ENCODE measurements at regions of chr14 and their contacts with region 1.

Region 1: GRCh38 chr14:92612988-92613658 is 99.5 kb downstream of the RIN3 start:
- DNase-seq: peak; percentile 50 to 62 (median 55)
- H3K4me3 ChIP-seq: no peak overlapping the region
- H3K4me3 Mint-ChIP-seq: peak overlapping the region in 2 of 8 donors; percentile 15 to 33
- H3K27ac ChIP-seq: no peak overlapping the region
- H3K27ac Mint-ChIP-seq: peak overlapping the region; percentile 22 to 91 (median 63)
- H3K4me1 ChIP-seq: peaks cover 52% of the 10 kb centered on the region
- H3K4me1 Mint-ChIP-seq: peaks cover 32 to 72% (median 52%) of the 10 kb centered on the region in 4 donors
- H3K27me3 ChIP-seq: no peaks in the 10 kb centered on the region
- H3K27me3 Mint-ChIP-seq: no peaks in the 10 kb centered on the region

Region 2: DNA sequence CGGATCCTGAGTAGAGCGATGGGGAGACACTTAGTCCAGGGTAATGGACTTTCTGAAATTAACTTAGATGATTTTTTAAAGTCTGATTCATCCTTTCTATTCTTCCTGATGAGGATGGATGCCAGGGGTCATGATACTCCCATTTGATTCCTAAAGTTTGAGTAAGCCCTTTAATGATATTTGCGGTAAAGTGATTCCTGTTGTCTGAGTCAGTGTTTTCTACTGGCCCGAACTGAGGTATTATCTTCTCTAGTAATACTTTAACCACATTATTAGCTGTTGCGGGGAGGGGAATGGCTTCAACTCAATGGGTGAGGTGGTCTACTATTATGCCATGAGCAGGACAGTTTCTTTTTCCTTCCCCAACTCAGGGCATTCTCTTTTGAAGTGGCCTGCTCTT is 12.1 kb after region 1 on chr14:
- CTCF ChIA-PET with region 1: interaction called, 15 read pairs
- POLR2A ChIA-PET with region 1: interaction called, 3 read pairs
- intact Hi-C with region 1: no loop called
- DNase-seq: no peak
- H3K4me3 ChIP-seq: no peak overlapping the region
- H3K4me3 Mint-ChIP-seq: no peak overlapping the region
- H3K27ac ChIP-seq: no peak overlapping the region
- H3K27ac Mint-ChIP-seq: no peak overlapping the region
- H3K4me1 ChIP-seq: no peaks in the 10 kb centered on the region
- H3K4me1 Mint-ChIP-seq: peaks cover 0 to 2% (median 0%) of the 10 kb centered on the region in 4 donors
- H3K27me3 ChIP-seq: no peaks in the 10 kb centered on the region
- H3K27me3 Mint-ChIP-seq: no peaks in the 10 kb centered on the region

Region 3: GRCh38 chr14:92651106-92651757 is 38.1 kb after region 1 on chr14:
- CTCF ChIA-PET with region 1: interaction called, 98 read pairs
- POLR2A ChIA-PET with region 1: interaction called, 139 read pairs
- intact Hi-C with region 1: loop called (anchors 1 kb)
- DNase-seq: peak; percentile 82 to 95 (median 85)
- H3K4me3 ChIP-seq: peak overlapping the region; percentile 47 to 58
- H3K4me3 Mint-ChIP-seq: peak overlapping the region; percentile 92 to 99 (median 98)
- H3K27ac ChIP-seq: peak overlapping the region; percentile 84
- H3K27ac Mint-ChIP-seq: peak overlapping the region; percentile 96 to 100 (median 99)
- H3K4me1 ChIP-seq: peaks cover 80% of the 10 kb centered on the region
- H3K4me1 Mint-ChIP-seq: peaks cover 51 to 94% (median 67%) of the 10 kb centered on the region in 4 donors
- H3K27me3 ChIP-seq: no peaks in the 10 kb centered on the region
- H3K27me3 Mint-ChIP-seq: no peaks in the 10 kb centered on the region

Region 4: GRCh38 chr14:92670160-92670559 is 57.0 kb after region 1 on chr14:
- CTCF ChIA-PET with region 1: interaction called, 35 read pairs
- POLR2A ChIA-PET with region 1: interaction called, 7 read pairs
- intact Hi-C with region 1: no loop called
- DNase-seq: no peak
- H3K4me3 ChIP-seq: no peak overlapping the region
- H3K4me3 Mint-ChIP-seq: peak overlapping the region in 1 of 8 donors; percentile 32
- H3K27ac ChIP-seq: no peak overlapping the region
- H3K27ac Mint-ChIP-seq: peak overlapping the region in 6 of 7 donors; percentile 47 to 91 (median 82)
- H3K4me1 ChIP-seq: peaks cover 51% of the 10 kb centered on the region
- H3K4me1 Mint-ChIP-seq: peaks cover 20 to 81% (median 51%) of the 10 kb centered on the region in 4 donors
- H3K27me3 ChIP-seq: no peaks in the 10 kb centered on the region
- H3K27me3 Mint-ChIP-seq: no peaks in the 10 kb centered on the region

Region 5: GRCh38 chr14:92675421-92675820 is 62.3 kb after region 1 on chr14:
- CTCF ChIA-PET with region 1: interaction called, 59 read pairs
- POLR2A ChIA-PET with region 1: interaction called, 17 read pairs
- intact Hi-C with region 1: no loop called
- DNase-seq: no peak
- H3K4me3 ChIP-seq: no peak overlapping the region
- H3K4me3 Mint-ChIP-seq: no peak overlapping the region
- H3K27ac ChIP-seq: no peak overlapping the region
- H3K27ac Mint-ChIP-seq: peak overlapping the region in 6 of 7 donors; percentile 23 to 95 (median 56)
- H3K4me1 ChIP-seq: peaks cover 39% of the 10 kb centered on the region
- H3K4me1 Mint-ChIP-seq: peaks cover 20 to 65% (median 40%) of the 10 kb centered on the region in 4 donors
- H3K27me3 ChIP-seq: no peaks in the 10 kb centered on the region
- H3K27me3 Mint-ChIP-seq: no peaks in the 10 kb centered on the region

Region 6: DNA sequence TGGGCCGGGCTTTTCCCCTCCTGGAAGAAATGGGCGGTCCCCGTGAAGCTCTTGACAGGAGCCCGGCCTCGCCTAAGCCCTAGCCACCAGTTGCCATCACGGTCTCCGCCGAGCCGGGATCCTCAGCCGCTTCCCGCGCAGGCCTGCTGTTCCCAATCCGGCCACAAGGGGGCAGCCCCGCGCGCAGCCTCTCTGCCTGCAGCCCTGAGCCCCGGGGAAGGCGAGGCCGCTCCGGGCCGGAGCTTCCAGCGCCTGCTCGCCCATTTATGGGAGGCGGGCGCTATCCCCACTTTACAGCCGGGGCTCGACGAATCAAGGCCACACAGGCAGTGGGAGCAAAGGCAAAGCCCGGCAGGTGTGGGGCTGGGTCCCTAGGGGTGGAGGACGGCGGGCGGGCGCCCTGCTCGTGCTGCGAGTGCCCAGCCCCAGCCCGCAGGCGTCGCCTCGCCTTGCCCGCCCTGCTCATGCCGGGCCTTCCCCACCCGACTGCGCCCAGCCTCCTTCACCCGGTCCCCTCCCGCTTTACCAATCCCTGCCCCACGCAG is 73.8 kb after region 1 on chr14:
- CTCF ChIA-PET with region 1: interaction called, 59 read pairs
- POLR2A ChIA-PET with region 1: interaction called, 4 read pairs
- intact Hi-C with region 1: no loop called
- DNase-seq: peak in 3 of 5 donors; percentile 46 to 61 (median 61)
- H3K4me3 ChIP-seq: no peak overlapping the region
- H3K4me3 Mint-ChIP-seq: no peak overlapping the region
- H3K27ac ChIP-seq: no peak overlapping the region
- H3K27ac Mint-ChIP-seq: peak overlapping the region in 1 of 7 donors; percentile 25
- H3K4me1 ChIP-seq: peaks cover under 1% of the 10 kb centered on the region
- H3K4me1 Mint-ChIP-seq: peaks cover 0 to 4% (median 0%) of the 10 kb centered on the region in 4 donors
- H3K27me3 ChIP-seq: no peaks in the 10 kb centered on the region
- H3K27me3 Mint-ChIP-seq: no peaks in the 10 kb centered on the region